ENCODE measurements at regions of chr6 and their contacts with region 1.

Region 1: DNA sequence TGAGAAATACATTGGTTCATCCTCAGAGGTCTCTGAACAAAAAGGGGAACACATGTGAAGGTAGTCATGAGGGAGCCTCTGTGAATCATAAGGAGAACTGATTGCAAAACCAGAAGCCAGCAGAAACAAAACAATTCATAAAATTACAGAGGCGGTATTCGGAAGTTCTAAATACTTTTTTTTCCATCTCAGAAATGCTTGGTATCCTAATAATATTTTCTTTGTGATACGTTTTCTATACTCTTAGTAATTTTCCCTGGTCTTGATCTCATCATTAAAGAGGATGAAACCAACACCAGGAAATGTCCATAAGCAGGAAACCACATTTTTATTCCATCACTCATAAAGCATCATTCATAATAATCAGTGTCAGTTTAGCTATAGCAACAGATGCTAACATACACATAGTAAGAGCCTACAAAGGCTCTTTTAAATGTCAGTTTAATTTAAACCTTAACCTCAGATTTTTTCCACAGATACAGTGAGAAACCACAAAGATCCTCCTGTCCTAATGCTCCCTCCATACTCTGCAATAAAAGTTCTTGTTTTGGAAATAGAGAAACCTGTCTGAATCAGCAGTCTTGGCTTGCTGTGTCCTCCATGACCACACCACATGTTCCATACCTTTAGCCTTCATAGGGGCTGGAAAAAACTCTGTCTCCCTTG is 29.2 kb downstream of the SGK1 start:
- DNase-seq: peak; percentile 15
- H3K4me3 Mint-ChIP-seq: peak overlapping the region; percentile 28
- H3K27ac Mint-ChIP-seq: peak overlapping the region; percentile 96
- H3K4me1 Mint-ChIP-seq: peaks cover 32% of the 10 kb centered on the region
- H3K27me3 Mint-ChIP-seq: no peaks in the 10 kb centered on the region

Region 2: GRCh38 chr6:134196568-134197193 is 92.0 kb before region 1 on chr6:
- intact Hi-C with region 1: loop called (anchors 5 kb)
- DNase-seq: no peak
- H3K4me3 Mint-ChIP-seq: no peak overlapping the region
- H3K27ac Mint-ChIP-seq: no peak overlapping the region
- H3K4me1 Mint-ChIP-seq: peaks cover 25% of the 10 kb centered on the region
- H3K27me3 Mint-ChIP-seq: no peaks in the 10 kb centered on the region

Region 3: GRCh38 chr6:134247231-134247833 is 41.3 kb before region 1 on chr6:
- intact Hi-C with region 1: loop called (anchors 1 kb)
- DNase-seq: peak; percentile 66
- H3K4me3 Mint-ChIP-seq: no peak overlapping the region
- H3K27ac Mint-ChIP-seq: peak overlapping the region; percentile 87
- H3K4me1 Mint-ChIP-seq: peaks cover 47% of the 10 kb centered on the region
- H3K27me3 Mint-ChIP-seq: no peaks in the 10 kb centered on the region

Region 4: GRCh38 chr6:134379086-134379485 is 90.4 kb after region 1 on chr6:
- intact Hi-C with region 1: loop called (anchors 2 kb)
- DNase-seq: peak; percentile 21
- H3K4me3 Mint-ChIP-seq: no peak overlapping the region
- H3K27ac Mint-ChIP-seq: peak overlapping the region; percentile 79
- H3K4me1 Mint-ChIP-seq: peaks cover 35% of the 10 kb centered on the region
- H3K27me3 Mint-ChIP-seq: no peaks in the 10 kb centered on the region

Region 5: DNA sequence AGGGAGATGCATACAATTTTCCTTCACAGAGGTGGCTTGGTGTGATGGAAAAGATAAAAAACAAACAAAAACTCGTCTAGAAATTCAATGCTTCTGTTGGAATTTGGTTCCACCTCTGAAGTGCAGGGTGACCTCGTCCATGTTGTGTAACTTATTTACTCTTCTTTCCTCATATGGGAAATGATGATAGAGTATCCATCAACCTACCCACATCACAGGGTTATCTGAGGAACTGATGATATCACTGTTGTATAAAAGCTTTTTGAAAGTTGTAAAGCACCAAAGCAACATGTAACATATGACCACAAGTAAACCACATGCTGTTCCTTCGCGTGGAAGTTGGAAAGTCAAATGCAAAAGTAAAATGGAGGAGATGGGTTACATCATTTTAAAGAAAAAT is 241.2 kb after region 1 on chr6:
- intact Hi-C with region 1: loop called (anchors 10 kb)
- DNase-seq: no peak
- H3K4me3 Mint-ChIP-seq: no peak overlapping the region
- H3K27ac Mint-ChIP-seq: peak overlapping the region; percentile 11
- H3K4me1 Mint-ChIP-seq: peaks cover 53% of the 10 kb centered on the region
- H3K27me3 Mint-ChIP-seq: no peaks in the 10 kb centered on the region

Region 6: GRCh38 chr6:134632024-134632423 is 343.4 kb after region 1 on chr6:
- intact Hi-C with region 1: loop called (anchors 2 kb)
- DNase-seq: no peak
- H3K4me3 Mint-ChIP-seq: no peak overlapping the region
- H3K27ac Mint-ChIP-seq: no peak overlapping the region
- H3K4me1 Mint-ChIP-seq: peaks cover 33% of the 10 kb centered on the region
- H3K27me3 Mint-ChIP-seq: peaks cover 10% of the 10 kb centered on the region

Measured in activated T-helper 2 cell treated with anti-CD3 and anti-CD28 coated beads, Interferon-gamma antibody, Interleukin-2, Interleukin-4, amounts not matched to agents 10 μg/mL and 5 μg/mL and 100 μg/mL, durations not matched to agents 14 hours and 24 hours and 36 hours (primary cell).